ENCODE measurements at regions of chr17 and their contacts with region 1.

Region 1: DNA sequence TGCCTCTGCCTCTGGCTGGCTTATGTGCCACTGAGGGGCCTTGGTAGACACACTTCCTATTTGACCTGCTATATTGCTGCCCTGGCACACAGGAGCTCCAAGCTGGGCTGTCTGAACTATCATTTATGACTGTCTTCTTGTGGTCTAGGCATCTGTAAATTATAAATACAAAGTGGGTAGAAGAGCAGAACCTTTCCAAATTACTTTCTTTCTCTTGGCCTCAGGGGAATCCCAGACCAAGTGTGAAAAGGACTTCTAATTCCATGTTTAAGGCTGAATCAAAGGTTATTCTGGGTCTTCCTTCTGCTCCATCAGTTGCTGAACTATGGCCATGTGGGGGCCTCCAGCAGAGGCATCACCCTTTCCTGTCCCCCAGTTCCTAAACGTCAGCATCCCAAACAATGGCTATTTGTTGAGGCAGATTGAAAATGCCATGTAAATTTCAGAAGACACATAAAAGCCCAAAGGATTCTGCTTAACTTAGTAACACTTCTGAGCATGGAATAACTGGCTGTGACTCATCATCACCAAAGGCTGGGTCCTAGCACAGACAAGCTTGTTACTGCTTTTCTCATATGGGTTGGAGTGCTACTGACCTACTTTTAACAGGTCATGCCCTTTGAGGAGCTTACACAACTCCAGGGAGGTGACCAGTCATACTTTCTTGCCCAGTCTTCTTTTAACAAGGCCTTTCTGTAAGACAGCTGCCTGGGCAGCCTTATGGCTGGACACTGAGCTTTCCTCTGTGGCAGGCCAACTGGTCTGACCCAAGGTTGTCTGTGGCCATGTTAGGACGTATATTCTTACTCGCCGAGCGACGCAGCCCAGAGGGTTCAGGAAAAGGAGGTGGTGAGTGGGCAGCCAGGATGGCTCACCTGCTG is 154.8 kb downstream of the VPS53 start:
- DNase-seq: peak; percentile 23 to 46
- ATAC-seq: peak; percentile 49 to 92 (median 84)
- H3K4me3 ChIP-seq: no peak overlapping the region
- H3K27ac ChIP-seq: peak overlapping the region; percentile 58 to 92 (median 82)
- H3K4me1 ChIP-seq: peaks cover 11 to 68% (median 45%) of the 10 kb centered on the region in 9 donors
- H3K27me3 ChIP-seq: no peaks in the 10 kb centered on the region
- CTCF ChIP-seq: no peak

Region 2: DNA sequence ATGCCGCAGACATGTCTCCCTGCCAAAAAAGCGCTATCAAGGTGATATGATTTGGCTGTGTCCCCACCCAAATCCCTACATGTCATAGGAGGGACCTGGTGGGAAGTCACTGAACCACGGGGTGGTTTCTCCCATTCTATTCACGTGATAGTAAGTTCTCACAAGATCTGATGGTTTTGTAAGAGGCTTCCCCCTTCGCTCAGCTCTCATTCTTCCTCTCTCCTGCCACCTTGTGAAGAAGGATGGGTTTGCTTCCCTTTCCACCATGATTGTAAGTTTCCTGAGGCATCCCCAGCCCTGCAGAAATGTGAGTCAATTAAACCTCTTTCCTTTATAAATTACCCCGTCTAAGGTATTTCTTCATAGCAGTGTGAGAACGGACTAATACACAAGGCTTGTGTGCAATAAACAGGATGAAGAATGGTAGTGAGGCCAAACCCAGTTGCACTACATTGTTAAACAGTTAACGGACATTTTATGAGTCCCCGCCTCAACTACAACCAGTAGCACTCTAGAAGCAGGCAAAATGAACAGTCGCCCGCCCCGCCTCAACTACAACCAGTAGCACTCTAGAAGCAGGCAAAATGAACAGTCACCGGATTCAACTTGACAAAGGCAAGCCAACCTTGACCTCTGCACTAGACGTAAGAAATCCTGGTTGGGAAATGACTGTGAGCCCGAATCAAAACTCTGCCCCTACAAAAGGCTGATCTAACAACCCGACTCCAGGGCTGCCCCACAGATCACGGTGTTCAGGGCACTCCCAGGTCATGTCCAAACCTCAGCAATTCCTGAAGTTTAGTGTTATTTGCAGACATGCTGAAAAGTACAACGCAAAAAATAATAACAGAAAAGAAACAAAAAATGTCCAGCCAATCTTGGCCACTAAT is 128.6 kb after region 1 on chr17:
- intact Hi-C with region 1: loop called in 3 of 10 experiments (anchors 10 kb)
- DNase-seq: peak in 1 of 2 donors; percentile 17
- ATAC-seq: peak in 2 of 8 donors; percentile 20 to 43
- H3K4me3 ChIP-seq: no peak overlapping the region
- H3K27ac ChIP-seq: peak overlapping the region in 1 of 10 donors; percentile 19
- H3K4me1 ChIP-seq: peaks cover 0 to 7% (median 0%) of the 10 kb centered on the region in 9 donors
- H3K27me3 ChIP-seq: no peaks in the 10 kb centered on the region
- CTCF ChIP-seq: peak in 7 of 9 donors; percentile 32 to 55 (median 43)

Region 3: DNA sequence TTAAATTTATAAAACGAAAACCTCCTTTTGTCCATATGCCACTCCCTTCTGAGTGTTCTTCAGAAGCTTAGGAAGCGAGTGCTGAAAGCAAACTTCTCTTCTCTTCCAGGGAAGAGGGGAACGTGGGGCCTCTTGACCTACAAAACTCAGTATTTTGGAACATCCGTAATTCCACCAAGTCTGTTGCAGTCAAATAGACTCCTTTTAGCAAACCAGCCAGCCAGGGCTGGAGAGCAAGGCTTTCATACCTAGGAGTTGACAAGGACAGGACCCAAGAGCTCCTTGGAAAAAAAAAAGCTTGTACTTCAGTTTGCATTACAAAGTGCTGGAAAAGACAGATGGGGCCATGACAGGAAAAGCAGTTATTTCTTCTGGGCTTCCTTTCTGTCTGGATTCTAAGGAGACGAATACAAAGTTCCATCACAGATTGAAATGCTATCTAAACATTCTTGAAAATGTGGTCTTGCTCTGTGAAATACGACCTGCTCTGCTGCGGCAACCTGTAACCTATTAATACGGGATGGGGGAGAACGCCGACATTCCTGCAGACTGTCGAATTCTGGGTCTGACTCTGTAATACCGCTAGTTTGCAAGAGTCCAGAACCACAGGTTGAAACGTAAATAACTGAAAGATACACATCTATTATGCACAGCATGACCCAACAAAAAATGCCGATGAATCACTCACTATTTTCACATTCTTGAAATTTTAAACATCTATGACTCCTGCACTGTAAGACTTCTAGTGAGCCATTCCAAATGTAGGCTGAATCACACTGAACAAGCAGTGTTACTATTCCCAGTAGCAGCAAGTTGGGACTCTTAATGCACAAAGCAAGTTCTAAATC is 134.2 kb after region 1 on chr17:
- intact Hi-C with region 1: loop called in 3 of 10 experiments (anchors 10 kb)
- DNase-seq: no peak
- ATAC-seq: no peak
- H3K4me3 ChIP-seq: no peak overlapping the region
- H3K27ac ChIP-seq: no peak overlapping the region
- H3K4me1 ChIP-seq: peaks cover 0 to 7% (median 0%) of the 10 kb centered on the region in 9 donors
- H3K27me3 ChIP-seq: no peaks in the 10 kb centered on the region
- CTCF ChIP-seq: no peak

Measured in heart right ventricle (tissue), 16 donors.